ENCODE measurements at regions of chr1 and their contacts with region 1.

Region 1: DNA sequence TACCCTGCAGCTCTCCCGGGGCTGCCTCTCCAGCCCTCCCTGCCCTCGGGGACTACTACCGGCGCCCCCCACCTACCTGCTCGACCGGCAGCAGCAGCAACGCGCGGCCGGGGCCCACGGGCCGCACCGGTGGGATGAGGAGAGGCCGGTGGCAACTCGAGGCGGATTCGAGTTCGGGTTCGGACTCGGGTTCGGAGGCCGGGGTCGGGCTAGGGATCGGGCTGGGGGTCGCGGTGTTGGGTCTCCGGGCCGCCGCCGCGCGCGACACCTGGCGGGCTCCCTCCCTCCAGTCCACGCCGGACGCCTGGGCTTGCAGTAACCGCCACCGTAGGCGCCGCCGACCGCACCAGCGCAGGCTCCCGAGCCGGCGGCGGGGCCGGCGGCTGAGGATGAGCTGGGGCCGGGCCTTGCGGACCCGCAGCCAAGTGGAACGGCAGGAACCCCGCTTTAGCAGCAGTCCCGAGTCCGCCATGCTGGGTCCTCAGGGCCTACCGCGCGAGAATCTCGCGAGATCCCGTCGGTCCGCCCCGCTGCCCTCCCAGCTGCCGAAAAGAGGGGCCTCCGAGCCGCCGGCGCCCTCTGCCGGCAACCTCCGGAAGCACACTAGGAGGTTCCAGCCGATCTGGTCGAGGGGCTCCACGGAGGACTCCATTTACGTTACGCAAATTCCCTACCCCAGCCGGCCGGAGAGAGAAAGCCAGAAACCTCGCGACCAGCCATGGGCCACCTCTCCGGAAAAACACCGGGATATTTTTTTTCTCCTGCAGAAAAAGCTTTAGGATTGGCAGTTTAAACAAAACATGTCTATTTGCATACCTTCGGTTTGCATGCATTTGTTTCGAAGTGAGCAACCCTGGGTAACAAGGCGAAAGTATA is at the start of gene NOL9:
- DNase-seq: peak; percentile 91 to 93 (median 91)
- H3K4me3 ChIP-seq: peak within 1 kb of the TSS; percentile 76 to 94 (median 87)
- H3K4me3 Mint-ChIP-seq: peak within 1 kb of the TSS; percentile 73 to 88
- H3K27ac ChIP-seq: peak within 1 kb of the TSS in 1 of 2 donors; percentile 83
- H3K27ac Mint-ChIP-seq: peak within 1 kb of the TSS; percentile 35 to 82 (median 43)
- H3K4me1 ChIP-seq: peaks cover 14 to 22% of the 10 kb centered on the region in 2 donors
- H3K4me1 Mint-ChIP-seq: peaks cover 11% of the 10 kb centered on the region
- H3K27me3 ChIP-seq: no peaks in the 10 kb centered on the region
- H3K27me3 Mint-ChIP-seq: peaks cover 0 to 1% (median 0%) of the 10 kb centered on the region in 3 donors
- CTCF ChIP-seq: peak; percentile 95
- polyA plus RNA-seq, gene NOL9: 3.7 to 11.5 (median 7.6) TPM

Region 2: GRCh38 chr1:6199298-6200187 is 354.7 kb before region 1 on chr1 and contains the start of gene RPL22:
- intact Hi-C with region 1: no loop called
- DNase-seq: peak; percentile 92 to 97 (median 97)
- H3K4me3 ChIP-seq: peak within 1 kb of the TSS; percentile 76 to 97 (median 95)
- H3K4me3 Mint-ChIP-seq: peak within 1 kb of the TSS; percentile 83 to 88
- H3K27ac ChIP-seq: peak within 1 kb of the TSS; percentile 53 to 80
- H3K27ac Mint-ChIP-seq: peak within 1 kb of the TSS; percentile 19 to 91 (median 77)
- H3K4me1 ChIP-seq: peaks cover 20 to 30% of the 10 kb centered on the region in 2 donors
- H3K4me1 Mint-ChIP-seq: peaks cover 29% of the 10 kb centered on the region
- H3K27me3 ChIP-seq: no peaks in the 10 kb centered on the region
- H3K27me3 Mint-ChIP-seq: peaks cover 10 to 20% (median 16%) of the 10 kb centered on the region in 3 donors
- CTCF ChIP-seq: no peak
- polyA plus RNA-seq, gene RPL22: 62.6 to 97.2 (median 65.6) TPM

Region 3: GRCh38 chr1:6519935-6520671 is 34.2 kb before region 1 on chr1:
- intact Hi-C with region 1: no loop called
- DNase-seq: no peak
- H3K4me3 ChIP-seq: no peak overlapping the region
- H3K4me3 Mint-ChIP-seq: no peak overlapping the region
- H3K27ac ChIP-seq: no peak overlapping the region
- H3K27ac Mint-ChIP-seq: no peak overlapping the region
- H3K4me1 ChIP-seq: no peaks in the 10 kb centered on the region
- H3K4me1 Mint-ChIP-seq: no peaks in the 10 kb centered on the region
- H3K27me3 ChIP-seq: no peaks in the 10 kb centered on the region
- H3K27me3 Mint-ChIP-seq: peaks cover 0 to 3% (median 0%) of the 10 kb centered on the region in 3 donors
- CTCF ChIP-seq: no peak

Region 4: GRCh38 chr1:6624710-6625583 is 70.7 kb after region 1 on chr1 and contains the start of gene THAP3:
- intact Hi-C with region 1: loop called (anchors 2 to 5 kb)
- DNase-seq: peak; percentile 77 to 92 (median 78)
- H3K4me3 ChIP-seq: peak within 1 kb of the TSS; percentile 57 to 84 (median 62)
- H3K4me3 Mint-ChIP-seq: peak within 1 kb of the TSS; percentile 83 to 93
- H3K27ac ChIP-seq: peak within 1 kb of the TSS in 1 of 2 donors; percentile 73
- H3K27ac Mint-ChIP-seq: peak within 1 kb of the TSS; percentile 48 to 90 (median 85)
- H3K4me1 ChIP-seq: peaks cover 14 to 17% of the 10 kb centered on the region in 2 donors
- H3K4me1 Mint-ChIP-seq: peaks cover 20% of the 10 kb centered on the region
- H3K27me3 ChIP-seq: no peaks in the 10 kb centered on the region
- H3K27me3 Mint-ChIP-seq: peaks cover 0 to 2% (median 0%) of the 10 kb centered on the region in 3 donors
- CTCF ChIP-seq: peak; percentile 31
- polyA plus RNA-seq, gene THAP3: 10.3 to 12.8 (median 10.3) TPM

Region 5: GRCh38 chr1:6701437-6702153 is 147.3 kb after region 1 on chr1 and contains the start of gene DNAJC11:
- intact Hi-C with region 1: loop called in 1 of 2 experiments (anchors 5 kb)
- DNase-seq: peak; percentile 84 to 87 (median 86)
- H3K4me3 ChIP-seq: peak within 1 kb of the TSS; percentile 64 to 93 (median 66)
- H3K4me3 Mint-ChIP-seq: peak within 1 kb of the TSS; percentile 81 to 87
- H3K27ac ChIP-seq: peak within 1 kb of the TSS; percentile 27 to 90
- H3K27ac Mint-ChIP-seq: peak within 1 kb of the TSS; percentile 81 to 90 (median 87)
- H3K4me1 ChIP-seq: peaks cover 12 to 16% of the 10 kb centered on the region in 2 donors
- H3K4me1 Mint-ChIP-seq: peaks cover 16% of the 10 kb centered on the region
- H3K27me3 ChIP-seq: no peaks in the 10 kb centered on the region
- H3K27me3 Mint-ChIP-seq: peaks cover 0 to 1% (median 0%) of the 10 kb centered on the region in 3 donors
- CTCF ChIP-seq: peak; percentile 99
- polyA plus RNA-seq, gene DNAJC11: 9.7 to 19.9 (median 15.8) TPM

Measured in CD14-positive monocyte (primary cell).